ENCODE measurements at regions of chr7 and their contacts with region 1.

Region 1: DNA sequence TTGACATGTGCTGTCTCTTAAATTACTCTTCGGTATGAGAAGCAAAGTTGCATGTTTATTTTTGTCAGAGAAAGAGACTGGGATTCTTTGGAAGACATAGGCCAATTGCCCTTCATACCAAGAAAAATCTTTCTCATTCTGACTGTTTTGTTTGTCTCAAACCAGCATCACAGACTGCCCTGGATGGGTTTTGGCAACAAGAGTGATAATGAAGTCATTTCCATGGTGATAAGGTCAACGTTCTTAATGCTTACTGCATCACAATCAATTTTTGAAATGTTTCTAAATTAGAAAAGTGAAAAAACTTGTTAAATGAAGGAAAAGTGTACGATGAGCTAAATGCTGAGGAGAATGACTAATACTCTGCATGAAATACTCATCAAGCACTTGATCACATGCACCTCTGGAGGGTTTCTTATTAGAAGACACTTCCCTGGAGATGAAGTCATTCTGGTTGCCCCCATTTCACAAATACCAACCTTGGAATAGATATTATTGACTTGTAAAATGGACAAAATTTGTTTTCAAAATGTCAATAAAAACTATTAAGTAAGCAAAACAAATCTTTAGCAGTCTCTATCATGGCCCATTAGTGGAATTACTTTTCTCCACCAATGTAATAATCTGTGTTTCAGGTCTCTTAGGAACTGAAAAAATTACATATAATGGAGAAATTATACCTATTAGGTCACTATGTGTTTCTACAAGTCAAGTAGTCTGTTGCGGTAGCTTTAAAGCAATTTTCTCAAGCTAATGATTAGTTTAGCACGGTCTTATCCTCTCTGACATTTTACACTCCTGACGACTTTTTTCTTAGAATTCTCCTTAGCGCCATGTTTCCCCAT is 19.9 kb upstream of the SEC61G start:
- DNase-seq: no peak
- H3K4me3 ChIP-seq: no peak overlapping the region
- CTCF ChIP-seq: no peak

Region 2: GRCh38 chr7:55192718-55193117 is 413.8 kb after region 1 on chr7:
- in situ Hi-C with region 1: loop called (anchors 5 kb)
- DNase-seq: peak; percentile 72
- H3K4me3 ChIP-seq: no peak overlapping the region
- CTCF ChIP-seq: no peak

Region 3: DNA sequence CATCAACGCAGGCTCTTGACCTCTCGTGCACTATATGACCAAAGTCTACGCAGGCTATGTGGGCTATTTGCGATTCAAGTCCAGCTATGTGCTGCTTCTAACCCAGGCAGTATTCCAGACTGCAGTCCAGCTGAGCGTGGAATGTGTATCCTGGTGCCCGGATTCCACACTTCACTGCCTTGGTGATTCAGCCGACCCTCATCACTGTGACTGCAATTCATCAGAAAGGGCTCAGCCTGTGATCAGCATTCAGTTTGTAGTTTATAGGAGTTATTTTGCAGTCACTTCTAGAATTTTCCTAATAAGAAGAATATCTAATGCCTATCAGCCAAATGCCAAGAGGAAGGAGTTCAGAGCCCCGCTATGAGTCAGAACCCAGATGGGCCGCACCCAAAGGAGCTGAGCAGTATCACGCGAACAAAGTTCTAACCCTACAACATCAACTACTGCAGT is 466.4 kb after region 1 on chr7:
- in situ Hi-C with region 1: loop called (anchors 5 kb)
- DNase-seq: peak; percentile 99
- H3K4me3 ChIP-seq: no peak overlapping the region
- CTCF ChIP-seq: no peak

Region 4: GRCh38 chr7:55271069-55271626 is 492.2 kb after region 1 on chr7:
- in situ Hi-C with region 1: loop called (anchors 5 kb)
- DNase-seq: no peak
- H3K4me3 ChIP-seq: no peak overlapping the region
- CTCF ChIP-seq: peak; percentile 55